BJ (cell line): ENCODE measurements at regions of chr4 and their contacts with region 1.

Region 1: GRCh38 chr4:28490669-28491068 is 1630.0 kb downstream of the STIM2 start:
- DNase-seq: no peak
- H3K4me3 ChIP-seq: no peak overlapping the region
- H3K27me3 ChIP-seq: no peaks in the 10 kb centered on the region
- CTCF ChIP-seq: no peak

Region 2: DNA sequence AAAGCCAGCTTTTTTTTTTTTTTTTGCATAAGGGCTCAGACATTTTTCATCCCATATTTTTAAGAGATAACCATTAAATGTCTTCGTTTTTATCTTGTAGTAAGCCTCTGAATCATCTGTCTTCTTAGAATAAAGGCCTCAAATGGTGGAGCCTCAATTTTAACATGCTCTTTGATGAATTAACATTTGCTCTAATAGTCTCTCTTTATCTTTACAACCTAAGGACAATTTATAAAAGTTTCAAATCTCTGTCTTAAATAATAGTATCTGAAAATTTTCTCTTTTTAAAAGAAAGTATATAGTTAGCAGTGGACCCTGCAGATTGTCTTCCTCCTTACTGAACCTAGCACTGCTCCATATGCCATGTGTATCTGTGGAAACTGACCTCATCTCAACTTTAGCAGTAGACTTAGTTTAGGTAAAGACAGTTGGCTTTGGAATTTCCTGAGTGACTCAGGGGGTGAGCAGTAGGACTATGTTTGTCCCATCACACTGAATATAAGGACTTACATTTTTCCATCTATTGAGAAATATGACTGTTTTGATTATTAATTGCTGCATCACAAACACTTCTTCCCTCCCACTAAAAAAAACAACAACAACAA is 28.0 kb after region 1 on chr4:
- CTCF ChIA-PET with region 1: no interaction called
- POLR2A ChIA-PET with region 1: interaction called, 12 read pairs
- DNase-seq: no peak
- H3K4me3 ChIP-seq: no peak overlapping the region
- H3K27me3 ChIP-seq: no peaks in the 10 kb centered on the region
- CTCF ChIP-seq: no peak

Region 3: DNA sequence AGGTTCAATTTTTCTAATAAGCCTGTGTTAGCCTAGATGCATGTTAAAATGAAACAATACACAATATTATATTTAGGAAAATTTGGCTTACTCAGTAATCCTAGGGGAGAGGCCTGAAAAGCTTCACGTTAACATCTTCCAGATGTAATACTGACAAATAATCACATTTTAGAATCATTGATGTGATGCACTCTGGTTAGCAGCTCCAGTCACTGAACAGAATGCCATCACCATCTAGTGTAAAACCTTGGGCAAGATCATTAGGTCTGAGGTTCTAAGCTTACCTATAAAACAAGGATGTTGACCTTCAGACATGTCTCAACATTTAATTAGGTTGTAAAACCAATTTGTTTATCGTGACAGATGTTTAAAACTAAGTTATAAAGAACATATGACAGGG is 74.7 kb after region 1 on chr4:
- CTCF ChIA-PET with region 1: no interaction called
- POLR2A ChIA-PET with region 1: no interaction called
- DNase-seq: no peak
- H3K4me3 ChIP-seq: no peak overlapping the region
- H3K27me3 ChIP-seq: no peaks in the 10 kb centered on the region
- CTCF ChIP-seq: no peak